Activated B cell treated with CpG ODN at 0.5 μM for 24 hours (primary cell): ENCODE measurements at regions of chr2 and their contacts with region 1.

Region 1: GRCh38 chr2:191566344-191566743 is 111.6 kb upstream of the NABP1 start:
- DNase-seq: peak; percentile 36
- ATAC-seq: peak; percentile 77
- H3K4me3 Mint-ChIP-seq: no peak overlapping the region
- H3K27ac Mint-ChIP-seq: no peak overlapping the region
- H3K4me1 Mint-ChIP-seq: peaks cover 12% of the 10 kb centered on the region
- H3K27me3 Mint-ChIP-seq: peaks cover 10% of the 10 kb centered on the region
- CTCF ChIP-seq: peak; percentile 54

Region 2: GRCh38 chr2:191501561-191502168 is 64.7 kb before region 1 on chr2:
- CTCF ChIA-PET with region 1: no interaction called
- POLR2A ChIA-PET with region 1: no interaction called
- intact Hi-C with region 1: no loop called
- DNase-seq: no peak
- ATAC-seq: no peak
- H3K4me3 Mint-ChIP-seq: no peak overlapping the region
- H3K27ac Mint-ChIP-seq: no peak overlapping the region
- H3K4me1 Mint-ChIP-seq: no peaks in the 10 kb centered on the region
- H3K27me3 Mint-ChIP-seq: peaks cover 8% of the 10 kb centered on the region
- CTCF ChIP-seq: no peak

Region 3: DNA sequence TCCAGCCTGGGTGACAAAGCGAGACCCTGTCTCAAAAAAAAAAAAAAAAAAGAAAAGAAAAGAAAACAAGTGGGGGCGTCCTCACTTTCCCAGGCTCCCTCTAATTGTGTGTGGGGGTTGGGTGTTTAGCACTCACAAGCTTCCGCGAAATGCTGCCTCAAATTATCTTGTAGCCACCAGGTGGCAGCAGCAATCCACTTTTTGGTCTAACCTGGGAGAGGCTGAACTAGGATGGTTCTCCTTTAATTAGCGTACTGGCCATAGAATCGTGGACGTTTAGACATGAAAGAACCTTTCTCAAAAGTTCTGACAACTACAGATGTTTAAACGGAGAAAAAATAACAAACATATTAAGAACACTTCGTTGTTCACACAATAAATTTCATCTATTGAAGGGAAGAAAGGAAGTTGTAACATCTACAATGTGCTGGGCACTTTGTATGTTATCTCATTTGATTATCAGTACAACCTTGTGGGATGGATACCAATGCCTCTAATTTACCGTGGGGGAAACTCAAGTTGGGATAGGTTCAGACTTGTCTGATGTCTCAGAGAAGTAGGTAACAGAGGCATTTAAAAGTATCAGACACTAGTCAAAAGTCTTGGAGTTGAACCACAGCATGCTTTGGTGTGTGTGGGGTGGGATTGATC is 11.1 kb before region 1 on chr2:
- CTCF ChIA-PET with region 1: interaction called, 11 read pairs
- POLR2A ChIA-PET with region 1: no interaction called
- intact Hi-C with region 1: no loop called
- DNase-seq: peak; percentile 63
- ATAC-seq: peak; percentile 94
- H3K4me3 Mint-ChIP-seq: no peak overlapping the region
- H3K27ac Mint-ChIP-seq: no peak overlapping the region
- H3K4me1 Mint-ChIP-seq: peaks cover 3% of the 10 kb centered on the region
- H3K27me3 Mint-ChIP-seq: peaks cover 5% of the 10 kb centered on the region
- CTCF ChIP-seq: peak; percentile 43

Region 4: DNA sequence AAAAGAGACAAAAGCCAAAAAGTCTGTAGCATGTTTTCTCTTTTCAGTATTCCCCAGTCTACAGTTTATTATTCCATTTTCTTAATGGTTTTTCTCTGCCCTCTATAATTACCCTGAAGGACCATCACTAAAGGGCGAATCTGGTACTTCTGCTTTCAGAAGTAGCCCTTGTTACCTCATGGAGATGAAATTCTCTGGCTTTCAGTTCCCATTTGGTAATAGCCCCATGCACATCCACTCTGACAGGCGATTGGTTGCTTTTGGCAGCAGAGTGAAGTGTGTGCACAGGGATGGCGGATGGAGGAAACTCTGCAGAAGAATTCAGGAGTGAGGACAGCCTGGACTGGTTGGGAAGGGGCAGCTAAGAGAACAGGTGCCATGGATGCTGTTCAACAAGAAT is 45.3 kb after region 1 on chr2:
- CTCF ChIA-PET with region 1: interaction called, 5 read pairs
- POLR2A ChIA-PET with region 1: interaction called, 9 read pairs
- intact Hi-C with region 1: loop called (anchors 1 kb)
- DNase-seq: no peak
- ATAC-seq: peak; percentile 97
- H3K4me3 Mint-ChIP-seq: peak overlapping the region; percentile 32
- H3K27ac Mint-ChIP-seq: peak overlapping the region; percentile 70
- H3K4me1 Mint-ChIP-seq: peaks cover 37% of the 10 kb centered on the region
- H3K27me3 Mint-ChIP-seq: no peaks in the 10 kb centered on the region
- CTCF ChIP-seq: no peak

Region 5: DNA sequence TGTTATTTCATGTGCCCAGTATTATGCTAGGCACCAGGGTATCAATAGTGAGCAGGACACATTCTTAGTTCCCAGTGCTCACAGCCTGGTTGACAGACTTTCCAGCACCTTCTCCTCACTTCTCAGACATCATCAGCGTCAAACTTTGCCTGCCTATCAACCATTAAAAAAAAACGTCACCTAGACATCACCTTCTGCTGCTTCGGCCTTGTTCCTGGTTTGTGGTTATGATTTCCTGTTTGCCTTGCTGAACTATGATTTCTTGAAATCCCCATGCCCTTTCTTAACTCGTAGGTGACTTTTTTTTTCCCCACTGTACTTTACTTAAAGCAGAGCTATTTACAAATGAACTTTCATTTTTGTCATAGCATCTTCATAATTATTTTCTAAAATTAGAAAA is 51.2 kb after region 1 on chr2:
- CTCF ChIA-PET with region 1: interaction called, 5 read pairs
- POLR2A ChIA-PET with region 1: interaction called, 9 read pairs
- intact Hi-C with region 1: loop called (anchors 2 kb)
- DNase-seq: peak; percentile 19
- ATAC-seq: peak; percentile 90
- H3K4me3 Mint-ChIP-seq: peak overlapping the region; percentile 56
- H3K27ac Mint-ChIP-seq: peak overlapping the region; percentile 86
- H3K4me1 Mint-ChIP-seq: peaks cover 53% of the 10 kb centered on the region
- H3K27me3 Mint-ChIP-seq: no peaks in the 10 kb centered on the region
- CTCF ChIP-seq: no peak

Region 6: GRCh38 chr2:191691016-191691735 is 124.8 kb after region 1 on chr2:
- CTCF ChIA-PET with region 1: interaction called, 38 read pairs
- POLR2A ChIA-PET with region 1: interaction called, 5 read pairs
- intact Hi-C with region 1: loop called (anchors 1 kb)
- DNase-seq: no peak
- ATAC-seq: peak; percentile 85
- H3K4me3 Mint-ChIP-seq: no peak overlapping the region
- H3K27ac Mint-ChIP-seq: peak overlapping the region; percentile 41
- H3K4me1 Mint-ChIP-seq: peaks cover 34% of the 10 kb centered on the region
- H3K27me3 Mint-ChIP-seq: no peaks in the 10 kb centered on the region
- CTCF ChIP-seq: no peak

Region 7: GRCh38 chr2:191758518-191759507 is 192.5 kb after region 1 on chr2:
- CTCF ChIA-PET with region 1: interaction called, 5 read pairs
- POLR2A ChIA-PET with region 1: no interaction called
- intact Hi-C with region 1: loop called (anchors 1 kb)
- DNase-seq: peak; percentile 39
- ATAC-seq: peak; percentile 100
- H3K4me3 Mint-ChIP-seq: peak overlapping the region; percentile 13
- H3K27ac Mint-ChIP-seq: peak overlapping the region; percentile 8
- H3K4me1 Mint-ChIP-seq: peaks cover 6% of the 10 kb centered on the region
- H3K27me3 Mint-ChIP-seq: no peaks in the 10 kb centered on the region
- CTCF ChIP-seq: no peak